ENCODE measurements at regions of chr13 and their contacts with region 1.

Region 1: DNA sequence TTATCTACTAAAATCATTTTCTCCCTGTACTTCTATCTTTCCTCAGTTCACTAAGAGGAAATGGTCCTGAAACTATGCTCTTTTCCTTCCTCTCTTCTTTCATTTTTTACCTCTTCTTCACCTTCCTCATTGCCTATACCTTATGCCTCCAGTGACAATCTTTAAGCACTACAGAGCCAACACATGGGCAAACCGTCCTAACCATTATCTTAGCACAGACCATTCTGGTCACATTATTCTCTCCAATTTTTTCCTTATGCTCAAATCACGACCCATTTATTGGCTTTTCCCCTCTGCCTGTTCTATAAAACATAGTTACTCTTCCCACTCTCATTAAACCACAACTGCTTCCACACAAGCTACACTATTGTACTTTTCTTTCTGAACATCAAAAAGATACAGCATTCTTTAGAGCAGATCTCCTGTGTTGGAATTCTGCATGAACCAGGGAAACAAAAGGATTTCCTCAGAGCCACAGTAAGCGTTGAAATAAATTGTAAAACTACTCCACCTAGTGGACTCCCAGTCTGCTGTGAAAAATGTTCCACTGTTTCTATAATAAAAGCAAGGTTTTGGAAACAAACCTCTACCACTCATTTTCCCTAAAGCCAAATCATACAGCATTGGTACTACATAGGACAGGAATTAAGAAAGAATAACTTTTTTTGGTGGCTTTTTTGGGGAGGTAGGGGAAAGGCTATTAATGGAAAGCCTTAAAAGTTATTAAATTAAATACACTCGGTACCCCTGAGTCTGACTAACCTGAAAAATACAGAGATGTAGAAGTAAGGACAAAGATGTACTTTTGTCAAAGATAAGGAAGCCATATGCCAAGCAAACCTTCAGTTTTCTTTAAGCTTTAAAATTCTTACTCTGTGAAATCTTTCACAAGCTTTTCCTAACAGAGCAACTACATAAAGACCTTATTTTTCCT is 19.5 kb downstream of the NUFIP1 start:
- DNase-seq: peak; percentile 14
- H3K4me3 ChIP-seq: no peak overlapping the region
- H3K27ac ChIP-seq: peak overlapping the region; percentile 59 to 78
- H3K4me1 ChIP-seq: peaks cover 14% of the 10 kb centered on the region
- H3K27me3 ChIP-seq: no peaks in the 10 kb centered on the region
- CTCF ChIP-seq: peak; percentile 71 to 93 (median 89)
- POLR2A ChIP-seq: no peak

Region 2: GRCh38 chr13:43905435-43906031 is 1064.3 kb before region 1 on chr13:
- intact Hi-C with region 1: loop called (anchors 5 kb)
- DNase-seq: peak; percentile 53
- H3K4me3 ChIP-seq: no peak overlapping the region
- H3K27ac ChIP-seq: no peak overlapping the region
- H3K4me1 ChIP-seq: no peaks in the 10 kb centered on the region
- H3K27me3 ChIP-seq: no peaks in the 10 kb centered on the region
- CTCF ChIP-seq: peak in 3 of 4 experiments; percentile 73 to 90 (median 89)
- POLR2A ChIP-seq: no peak

Region 3: GRCh38 chr13:44050450-44051063 is 919.3 kb before region 1 on chr13:
- intact Hi-C with region 1: loop called (anchors 10 kb)
- DNase-seq: no peak
- H3K4me3 ChIP-seq: no peak overlapping the region
- H3K27ac ChIP-seq: peak overlapping the region in 1 of 2 donors; percentile 15
- H3K4me1 ChIP-seq: no peaks in the 10 kb centered on the region
- H3K27me3 ChIP-seq: no peaks in the 10 kb centered on the region
- CTCF ChIP-seq: peak; percentile 50 to 86 (median 72)
- POLR2A ChIP-seq: no peak

Region 4: GRCh38 chr13:44484562-44485138 is 485.2 kb before region 1 on chr13:
- intact Hi-C with region 1: loop called (anchors 5 kb)
- DNase-seq: no peak
- H3K4me3 ChIP-seq: no peak overlapping the region
- H3K27ac ChIP-seq: no peak overlapping the region
- H3K4me1 ChIP-seq: no peaks in the 10 kb centered on the region
- H3K27me3 ChIP-seq: no peaks in the 10 kb centered on the region
- CTCF ChIP-seq: no peak
- POLR2A ChIP-seq: no peak

Region 5: DNA sequence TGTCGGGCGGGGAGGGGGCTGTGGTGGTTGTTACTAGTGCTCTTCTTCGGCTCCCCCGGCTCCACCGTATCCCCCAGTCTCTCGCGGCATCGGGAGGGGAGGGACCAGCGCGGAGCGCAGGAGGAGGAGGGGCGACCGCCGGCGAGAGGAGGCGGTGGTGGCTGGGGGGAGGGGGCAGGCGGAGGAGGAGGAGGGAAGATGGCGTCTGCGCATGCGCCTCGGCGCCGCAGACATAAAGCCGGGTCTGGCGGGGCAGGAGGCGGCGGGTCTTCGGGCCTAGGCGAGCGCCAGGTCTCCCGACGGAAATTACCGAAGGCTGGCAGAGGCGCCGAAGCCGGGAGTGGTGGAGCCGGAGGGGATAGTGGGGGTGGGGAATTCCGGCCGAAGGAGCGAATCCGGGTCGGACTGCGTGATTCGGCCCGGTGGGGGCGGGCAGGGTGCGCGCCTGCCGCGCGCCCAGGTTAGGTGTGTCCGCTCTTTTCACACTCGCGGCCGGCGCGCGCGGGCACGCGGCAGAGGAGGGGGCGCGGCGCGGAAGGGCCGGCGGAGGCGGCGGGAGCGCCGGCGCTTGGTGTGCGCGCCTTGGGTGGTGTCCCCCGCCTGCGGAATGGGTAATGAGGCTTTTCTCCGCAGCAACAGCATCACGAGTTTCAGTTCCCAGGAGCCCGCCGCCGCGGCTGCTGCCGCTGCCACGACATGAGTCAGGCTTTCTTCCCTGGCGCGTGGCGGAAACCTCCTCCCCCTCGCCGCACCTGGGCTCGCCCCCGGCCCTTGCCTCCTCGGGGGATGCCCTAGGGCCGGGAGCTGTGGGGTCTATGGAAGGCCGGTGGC is 392.4 kb before region 1 on chr13:
- intact Hi-C with region 1: loop called (anchors 2 kb)
- DNase-seq: peak; percentile 96
- H3K4me3 ChIP-seq: peak overlapping the region; percentile 90 to 97
- H3K27ac ChIP-seq: peak overlapping the region; percentile 98
- H3K4me1 ChIP-seq: peaks cover 5% of the 10 kb centered on the region
- H3K27me3 ChIP-seq: no peaks in the 10 kb centered on the region
- CTCF ChIP-seq: no peak
- POLR2A ChIP-seq: peak; percentile 65

Region 6: GRCh38 chr13:44879463-44880058 is 90.3 kb before region 1 on chr13:
- intact Hi-C with region 1: loop called (anchors 10 kb)
- DNase-seq: no peak
- H3K4me3 ChIP-seq: no peak overlapping the region
- H3K27ac ChIP-seq: no peak overlapping the region
- H3K4me1 ChIP-seq: no peaks in the 10 kb centered on the region
- H3K27me3 ChIP-seq: no peaks in the 10 kb centered on the region
- CTCF ChIP-seq: peak in 3 of 4 experiments; percentile 23 to 42 (median 38)
- POLR2A ChIP-seq: no peak

Measured in prostate gland (tissue), 2 donors.